MCF 10A (cell line): ENCODE measurements at regions of chr5 and their contacts with region 1.

Region 1: DNA sequence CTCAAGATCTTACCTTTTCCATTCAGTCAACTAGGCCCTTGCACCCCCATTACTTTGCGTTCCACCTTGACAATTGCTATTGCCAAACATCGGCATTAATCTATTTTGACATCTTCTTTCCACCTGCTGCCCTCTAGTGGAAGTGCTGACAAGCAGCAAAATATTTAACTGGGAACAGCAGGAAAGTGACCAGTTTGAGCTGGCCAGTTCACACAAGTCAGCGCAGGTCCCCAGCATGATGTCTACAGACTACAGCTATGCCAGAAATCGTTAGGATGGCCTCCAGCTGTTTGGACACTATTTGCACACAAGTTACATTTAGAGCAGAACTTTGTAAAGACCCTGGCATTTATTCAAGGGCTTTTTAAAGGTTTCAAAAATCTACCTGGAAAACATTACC is 160.1 kb downstream of the GHR start:
- DNase-seq: peak; percentile 88
- H3K4me3 Mint-ChIP-seq: no peak overlapping the region
- H3K27ac Mint-ChIP-seq: no peak overlapping the region
- H3K4me1 Mint-ChIP-seq: peaks cover 26% of the 10 kb centered on the region
- H3K27me3 Mint-ChIP-seq: no peaks in the 10 kb centered on the region
- CTCF ChIP-seq: peak; percentile 72

Region 2: GRCh38 chr5:42005561-42006153 is 577.7 kb before region 1 on chr5:
- CTCF ChIA-PET with region 1: interaction called, 4 read pairs
- POLR2A ChIA-PET with region 1: no interaction called
- intact Hi-C with region 1: loop called (anchors 1 kb)
- DNase-seq: peak; percentile 33
- H3K4me3 Mint-ChIP-seq: no peak overlapping the region
- H3K27ac Mint-ChIP-seq: no peak overlapping the region
- H3K4me1 Mint-ChIP-seq: no peaks in the 10 kb centered on the region
- H3K27me3 Mint-ChIP-seq: no peaks in the 10 kb centered on the region
- CTCF ChIP-seq: peak; percentile 69

Region 3: GRCh38 chr5:42502613-42503470 is 80.5 kb before region 1 on chr5:
- CTCF ChIA-PET with region 1: interaction called, 25 read pairs
- POLR2A ChIA-PET with region 1: interaction called, 4 read pairs
- intact Hi-C with region 1: no loop called
- DNase-seq: no peak
- H3K4me3 Mint-ChIP-seq: peak overlapping the region; percentile 16
- H3K27ac Mint-ChIP-seq: peak overlapping the region; percentile 86
- H3K4me1 Mint-ChIP-seq: peaks cover 39% of the 10 kb centered on the region
- H3K27me3 Mint-ChIP-seq: no peaks in the 10 kb centered on the region
- CTCF ChIP-seq: no peak

Region 4: DNA sequence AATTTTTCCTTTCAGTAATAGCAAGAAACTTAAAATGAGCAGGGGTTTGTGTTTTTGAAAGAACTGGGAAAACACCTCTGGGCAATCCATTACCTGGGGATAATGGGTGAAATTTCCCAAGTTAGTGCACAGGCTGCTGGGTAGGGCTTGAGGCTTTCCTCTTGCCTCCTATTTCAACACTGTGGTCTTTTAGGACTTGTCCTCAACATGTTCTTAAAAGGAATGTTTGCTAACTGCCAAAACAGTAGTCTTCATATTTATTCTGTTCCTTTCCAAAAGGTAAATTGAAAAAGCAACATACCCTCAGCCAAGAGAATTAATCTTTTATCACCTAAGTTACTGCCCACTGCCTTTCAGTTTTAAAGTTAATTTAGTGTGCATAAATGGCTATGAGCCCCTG is 15.0 kb after region 1 on chr5:
- CTCF ChIA-PET with region 1: interaction called, 23 read pairs
- POLR2A ChIA-PET with region 1: interaction called, 27 read pairs
- intact Hi-C with region 1: no loop called
- DNase-seq: peak; percentile 58
- H3K4me3 Mint-ChIP-seq: no peak overlapping the region
- H3K27ac Mint-ChIP-seq: peak overlapping the region; percentile 72
- H3K4me1 Mint-ChIP-seq: peaks cover 7% of the 10 kb centered on the region
- H3K27me3 Mint-ChIP-seq: no peaks in the 10 kb centered on the region
- CTCF ChIP-seq: no peak

Region 5: GRCh38 chr5:42767491-42768105 is 184.3 kb after region 1 on chr5:
- CTCF ChIA-PET with region 1: interaction called, 13 read pairs
- POLR2A ChIA-PET with region 1: interaction called, 6 read pairs
- intact Hi-C with region 1: loop called (anchors 10 kb)
- DNase-seq: peak; percentile 58
- H3K4me3 Mint-ChIP-seq: no peak overlapping the region
- H3K27ac Mint-ChIP-seq: no peak overlapping the region
- H3K4me1 Mint-ChIP-seq: peaks cover 1% of the 10 kb centered on the region
- H3K27me3 Mint-ChIP-seq: no peaks in the 10 kb centered on the region
- CTCF ChIP-seq: peak; percentile 64

Region 6: DNA sequence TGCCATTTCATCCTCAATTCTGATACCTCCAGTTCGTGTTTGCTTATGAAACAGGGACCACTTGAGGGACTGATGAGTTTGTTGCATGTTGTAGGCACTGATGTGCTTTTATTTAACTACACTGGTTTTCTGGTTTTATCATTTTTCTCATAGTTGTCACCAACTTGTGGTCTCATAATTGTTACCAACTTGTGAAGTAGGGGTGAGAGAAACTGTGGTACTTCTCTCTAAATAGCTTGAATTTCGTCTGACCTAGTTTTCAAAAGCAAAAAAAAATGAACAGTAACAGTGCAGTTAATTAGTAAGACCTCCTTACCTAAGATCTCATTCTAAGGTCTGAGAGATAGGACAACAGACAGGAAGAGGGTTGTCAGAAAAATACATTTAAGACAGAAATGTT is 378.8 kb after region 1 on chr5:
- CTCF ChIA-PET with region 1: no interaction called
- POLR2A ChIA-PET with region 1: no interaction called
- intact Hi-C with region 1: no loop called
- DNase-seq: no peak
- H3K4me3 Mint-ChIP-seq: no peak overlapping the region
- H3K27ac Mint-ChIP-seq: no peak overlapping the region
- H3K4me1 Mint-ChIP-seq: no peaks in the 10 kb centered on the region
- H3K27me3 Mint-ChIP-seq: no peaks in the 10 kb centered on the region
- CTCF ChIP-seq: no peak